ENCODE measurements at regions of chr2 and their contacts with region 1.

Region 1: DNA sequence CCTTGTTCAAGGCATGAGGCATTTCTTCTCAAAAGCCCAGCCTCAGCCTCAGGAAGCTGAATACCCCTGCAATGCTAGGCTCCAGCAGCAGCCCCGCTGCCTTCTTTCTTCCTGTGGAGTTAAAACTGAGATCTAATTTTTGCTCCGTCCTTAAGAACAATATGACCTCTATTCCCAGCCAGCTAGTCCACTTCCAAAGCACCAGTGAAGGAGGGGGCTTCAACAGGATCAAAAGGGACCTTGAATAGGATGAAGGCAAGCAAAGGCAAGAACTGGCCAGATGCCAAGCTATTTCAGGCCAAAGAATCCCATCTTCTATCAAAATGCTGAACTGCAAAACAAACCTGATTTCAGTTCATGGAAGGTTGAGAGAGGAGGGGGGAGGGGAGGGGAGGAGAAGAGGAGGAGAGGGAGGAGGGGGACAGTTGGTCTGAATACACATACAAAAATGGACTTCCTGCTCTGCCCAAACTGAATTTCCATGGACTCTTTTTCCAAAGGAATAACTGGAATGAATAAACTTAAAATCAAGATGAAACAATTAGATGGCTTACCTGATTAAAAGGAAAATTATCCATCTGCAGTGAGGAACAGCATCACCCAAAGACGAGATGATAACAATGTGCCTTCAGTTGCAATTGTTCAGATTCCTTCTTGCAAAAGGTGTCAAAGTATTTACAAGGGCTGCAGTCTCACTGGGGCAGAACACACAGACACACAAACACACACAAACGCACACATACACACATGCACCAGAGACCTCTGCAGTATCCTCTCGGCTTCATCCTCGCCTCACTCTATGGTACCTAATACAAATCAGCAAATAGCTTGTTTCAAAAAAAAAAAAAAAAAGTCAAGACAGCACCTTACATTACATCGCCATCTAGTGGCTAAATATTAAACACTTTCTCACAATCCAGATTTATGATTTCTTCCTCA is at the start of gene SCN1A:
- DNase-seq: no peak
- ATAC-seq: no peak
- H3K4me3 Mint-ChIP-seq: no peak within 1 kb of the TSS
- H3K27ac Mint-ChIP-seq: no peak within 1 kb of the TSS
- H3K4me1 Mint-ChIP-seq: peaks cover 2% of the 10 kb centered on the region
- H3K27me3 Mint-ChIP-seq: peaks cover 18% of the 10 kb centered on the region
- total RNA-seq, gene SCN1A: not detected

Region 2: GRCh38 chr2:166057370-166058164 is 69.9 kb before region 1 on chr2:
- CTCF ChIA-PET with region 1: interaction called, 34 read pairs
- POLR2A ChIA-PET with region 1: no interaction called
- intact Hi-C with region 1: loop called (anchors 1 kb)
- DNase-seq: no peak
- ATAC-seq: no peak
- H3K4me3 Mint-ChIP-seq: no peak overlapping the region
- H3K27ac Mint-ChIP-seq: no peak overlapping the region
- H3K4me1 Mint-ChIP-seq: no peaks in the 10 kb centered on the region
- H3K27me3 Mint-ChIP-seq: no peaks in the 10 kb centered on the region

Region 3: DNA sequence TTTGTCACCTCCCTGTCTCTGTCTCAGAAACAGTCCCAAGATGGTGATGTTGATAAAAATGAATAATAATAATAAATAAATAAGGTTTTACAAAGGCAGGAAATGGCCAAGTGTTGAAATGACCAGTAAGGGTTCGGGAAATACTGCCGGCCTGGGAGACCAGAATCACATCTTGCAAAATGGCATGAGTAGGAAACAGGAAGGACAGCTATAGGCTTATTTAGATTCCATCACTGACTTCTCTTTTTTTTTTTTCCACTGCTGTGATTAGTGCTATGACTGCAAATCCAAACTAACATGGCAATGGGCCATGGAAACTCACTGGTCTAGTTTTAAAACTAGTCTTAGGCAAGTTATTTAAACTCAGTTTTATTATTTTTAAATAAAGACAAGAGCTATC is 60.3 kb before region 1 on chr2:
- CTCF ChIA-PET with region 1: interaction called, 13 read pairs
- POLR2A ChIA-PET with region 1: no interaction called
- intact Hi-C with region 1: no loop called
- DNase-seq: no peak
- ATAC-seq: no peak
- H3K4me3 Mint-ChIP-seq: no peak overlapping the region
- H3K27ac Mint-ChIP-seq: no peak overlapping the region
- H3K4me1 Mint-ChIP-seq: no peaks in the 10 kb centered on the region
- H3K27me3 Mint-ChIP-seq: peaks cover 1% of the 10 kb centered on the region

Measured in activated CD4-positive, alpha-beta T cell treated with anti-CD3 and anti-CD28 coated beads for 36 hours (primary cell).